Body of pancreas (tissue), 4 donors: ENCODE measurements at regions of chr14 and their contacts with region 1.

Region 1: DNA sequence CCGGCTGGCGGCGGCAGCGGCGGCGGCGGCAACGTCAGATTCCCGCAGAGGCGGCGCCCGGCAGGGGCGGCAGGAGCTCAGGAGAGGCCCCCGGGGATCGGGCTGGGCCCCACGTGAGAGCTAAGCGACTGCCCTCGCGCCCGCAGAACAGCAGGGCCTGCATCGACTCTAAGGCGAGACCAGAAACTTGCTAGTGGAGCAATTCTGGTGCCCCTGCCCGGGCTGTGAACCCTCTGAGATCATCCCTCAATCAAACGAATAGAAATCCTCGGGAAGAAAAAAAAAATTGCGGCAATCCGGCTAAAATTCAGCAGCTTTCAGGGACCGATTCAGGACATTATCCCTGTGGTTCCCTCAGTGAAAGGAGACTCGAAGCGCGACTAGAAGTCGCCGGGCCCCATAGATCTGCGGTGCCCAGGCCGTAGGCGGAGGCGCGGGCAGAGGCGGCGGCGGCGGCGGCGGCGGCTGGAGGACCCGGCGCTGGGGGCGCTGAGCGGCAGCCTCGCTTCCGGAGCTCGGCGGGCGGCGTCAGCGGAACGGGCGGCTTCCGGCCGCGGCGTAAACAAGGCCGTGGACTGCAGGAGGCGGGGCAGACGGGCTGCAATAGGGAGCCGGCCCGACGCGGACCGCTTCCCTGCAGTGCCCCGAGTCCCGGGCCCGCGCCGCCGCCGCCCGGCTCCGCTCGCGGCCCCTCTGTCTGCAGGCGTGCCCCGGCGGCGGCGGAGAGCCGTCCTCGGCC is at the start of gene KLHDC2:
- DNase-seq: peak; percentile 92 to 94 (median 92)
- ATAC-seq: peak; percentile 88
- H3K4me3 ChIP-seq: peak within 1 kb of the TSS; percentile 60 to 90
- H3K27ac ChIP-seq: peak within 1 kb of the TSS; percentile 88 to 99 (median 92)
- H3K4me1 ChIP-seq: peaks cover 36% of the 10 kb centered on the region
- H3K27me3 ChIP-seq: no peaks in the 10 kb centered on the region
- CTCF ChIP-seq: peak in 5 of 7 experiments; percentile 12 to 86 (median 33)
- POLR2A ChIP-seq: peak; percentile 80 to 98 (median 90)
- total RNA-seq, gene KLHDC2: 38.6 to 90.0 TPM

Region 2: DNA sequence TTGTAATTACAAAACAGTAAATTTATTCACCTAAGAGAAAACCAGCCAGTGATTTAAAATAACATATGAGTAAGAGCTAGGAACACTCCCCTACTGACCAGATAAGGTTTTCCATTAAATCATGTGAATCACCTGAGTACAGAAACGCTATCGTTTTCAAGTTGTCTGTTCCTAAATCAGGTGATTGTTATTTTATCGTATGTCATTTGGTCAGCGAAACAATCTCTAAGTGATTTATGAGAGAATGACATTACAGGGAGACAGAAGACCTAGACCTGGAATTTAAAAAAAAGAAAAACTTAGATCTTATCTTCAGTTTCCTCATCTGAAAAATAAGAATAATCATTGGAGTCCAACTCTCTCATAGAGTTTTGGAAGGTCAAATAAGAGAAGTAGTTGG is 228.8 kb before region 1 on chr14:
- intact Hi-C with region 1: no loop called
- DNase-seq: no peak
- ATAC-seq: no peak
- H3K4me3 ChIP-seq: no peak overlapping the region
- H3K27ac ChIP-seq: no peak overlapping the region
- H3K4me1 ChIP-seq: no peaks in the 10 kb centered on the region
- H3K27me3 ChIP-seq: no peaks in the 10 kb centered on the region
- CTCF ChIP-seq: no peak
- POLR2A ChIP-seq: no peak

Region 3: DNA sequence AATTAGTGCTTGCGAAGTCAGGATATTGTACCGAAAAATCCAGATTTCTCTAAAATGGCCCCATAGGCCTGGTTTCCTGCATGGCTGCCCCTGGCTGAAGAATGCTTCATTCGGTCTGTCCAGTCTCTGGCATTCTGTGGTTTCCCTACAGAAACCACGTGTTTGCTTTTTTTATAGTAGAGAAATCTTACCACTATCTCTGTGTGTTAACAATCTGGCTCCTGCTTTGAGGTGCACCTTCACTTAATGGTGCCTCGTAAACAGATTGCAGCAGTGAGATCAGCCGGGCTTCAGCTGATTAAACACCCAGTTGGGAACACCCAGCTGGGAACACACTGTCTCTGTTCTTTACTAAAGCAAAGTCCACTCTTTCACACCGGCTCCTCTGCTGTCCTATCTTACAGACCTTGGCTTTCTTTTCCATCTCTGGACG is 126.0 kb before region 1 on chr14:
- intact Hi-C with region 1: loop called (anchors 10 kb)
- DNase-seq: peak; percentile 83 to 92 (median 89)
- ATAC-seq: peak; percentile 97
- H3K4me3 ChIP-seq: no peak overlapping the region
- H3K27ac ChIP-seq: peak overlapping the region; percentile 60 to 85 (median 72)
- H3K4me1 ChIP-seq: peaks cover 72% of the 10 kb centered on the region
- H3K27me3 ChIP-seq: no peaks in the 10 kb centered on the region
- CTCF ChIP-seq: peak in 1 of 7 experiments; percentile 12
- POLR2A ChIP-seq: peak in 2 of 3 donors; percentile 39 to 40

Region 4: DNA sequence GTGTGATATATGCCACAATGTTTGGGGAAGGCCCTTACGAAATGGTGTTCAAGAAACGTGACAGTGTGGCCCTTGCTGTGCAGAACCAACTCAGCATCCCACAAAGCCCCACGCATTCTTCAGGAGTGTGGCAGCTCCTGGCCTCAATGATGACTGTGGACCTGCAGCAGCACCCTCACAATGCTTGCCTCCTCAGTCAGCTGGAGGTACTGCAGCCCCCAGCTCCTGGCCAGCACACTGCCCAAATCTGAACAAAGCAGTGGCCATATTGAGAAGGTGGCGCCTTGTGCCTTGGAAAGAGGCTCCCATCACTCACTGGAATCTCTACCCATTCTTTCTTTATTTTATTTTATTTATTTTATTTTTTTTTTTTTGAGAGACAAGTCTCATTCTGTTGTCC is 90.1 kb before region 1 on chr14:
- intact Hi-C with region 1: no loop called
- DNase-seq: no peak
- ATAC-seq: no peak
- H3K4me3 ChIP-seq: no peak overlapping the region
- H3K27ac ChIP-seq: no peak overlapping the region
- H3K4me1 ChIP-seq: no peaks in the 10 kb centered on the region
- H3K27me3 ChIP-seq: no peaks in the 10 kb centered on the region
- CTCF ChIP-seq: no peak
- POLR2A ChIP-seq: no peak

Region 5: DNA sequence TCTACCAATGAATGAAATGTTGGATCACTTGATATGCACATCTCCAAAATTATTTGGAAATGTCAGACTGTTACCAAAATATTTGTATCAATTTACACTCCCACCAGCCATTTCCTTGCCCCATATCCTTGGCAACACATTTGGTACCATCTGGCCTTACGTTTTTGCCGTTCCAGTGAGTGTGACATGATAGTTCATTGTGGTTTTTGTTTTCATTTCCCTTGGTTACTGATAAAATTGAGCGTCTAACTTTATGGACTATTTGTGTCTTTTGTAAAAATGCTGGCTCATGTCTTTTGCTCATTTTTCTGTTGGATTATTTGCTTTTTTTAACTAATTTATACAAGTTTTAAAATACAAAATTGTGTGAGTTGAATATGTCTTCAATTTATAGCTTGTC is 63.8 kb before region 1 on chr14:
- intact Hi-C with region 1: loop called (anchors 10 kb)
- DNase-seq: no peak
- ATAC-seq: no peak
- H3K4me3 ChIP-seq: no peak overlapping the region
- H3K27ac ChIP-seq: no peak overlapping the region
- H3K4me1 ChIP-seq: no peaks in the 10 kb centered on the region
- H3K27me3 ChIP-seq: no peaks in the 10 kb centered on the region
- CTCF ChIP-seq: no peak
- POLR2A ChIP-seq: no peak